Heart right ventricle (tissue), 16 donors: ENCODE measurements at regions of chr9 and their contacts with region 1.

Region 1: DNA sequence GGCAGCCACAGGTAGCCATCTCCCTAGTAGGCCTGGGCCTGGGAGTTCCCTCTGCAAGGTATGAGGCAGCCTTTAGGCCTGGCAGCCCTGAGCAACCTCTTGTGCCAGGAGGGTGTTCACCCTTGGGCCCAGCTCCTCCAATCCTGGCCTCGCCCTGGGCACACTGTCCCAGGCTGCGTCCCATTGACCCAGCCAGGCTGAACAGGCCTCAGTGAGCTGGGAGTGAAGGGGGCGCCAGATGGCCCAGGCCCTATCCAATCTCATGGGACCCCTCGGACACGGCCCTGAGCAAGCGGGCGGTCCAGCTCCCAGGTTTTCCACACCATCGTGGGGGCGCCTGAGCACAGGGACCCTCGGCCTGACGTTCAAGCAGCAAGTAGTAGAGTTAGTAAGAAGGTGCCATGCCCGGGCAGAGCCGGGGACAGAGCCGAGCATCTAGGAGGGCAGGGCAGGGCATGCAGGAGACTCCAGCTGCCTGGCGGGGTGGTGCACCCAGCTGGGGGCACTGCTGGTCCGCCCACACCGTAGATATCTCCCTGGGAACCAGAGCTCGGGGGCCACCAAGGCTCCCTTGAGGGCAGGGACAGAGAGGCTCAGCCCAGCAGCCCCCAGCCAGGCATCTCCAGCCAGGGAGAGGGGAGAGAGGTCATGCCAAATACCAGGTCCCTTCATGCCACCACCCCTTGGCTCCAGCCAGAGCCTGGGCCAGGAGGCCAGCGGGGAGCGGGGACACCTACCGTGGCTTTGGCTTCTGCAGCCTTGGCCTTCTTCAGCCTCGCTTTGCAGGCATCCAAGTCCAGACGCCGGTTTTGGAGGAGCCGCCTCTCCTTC is 14.2 kb downstream of the SH3GLB2 start:
- DNase-seq: no peak
- ATAC-seq: no peak
- H3K4me3 ChIP-seq: no peak overlapping the region
- H3K27ac ChIP-seq: no peak overlapping the region
- H3K4me1 ChIP-seq: no peaks in the 10 kb centered on the region
- H3K27me3 ChIP-seq: no peaks in the 10 kb centered on the region
- CTCF ChIP-seq: no peak

Region 2: DNA sequence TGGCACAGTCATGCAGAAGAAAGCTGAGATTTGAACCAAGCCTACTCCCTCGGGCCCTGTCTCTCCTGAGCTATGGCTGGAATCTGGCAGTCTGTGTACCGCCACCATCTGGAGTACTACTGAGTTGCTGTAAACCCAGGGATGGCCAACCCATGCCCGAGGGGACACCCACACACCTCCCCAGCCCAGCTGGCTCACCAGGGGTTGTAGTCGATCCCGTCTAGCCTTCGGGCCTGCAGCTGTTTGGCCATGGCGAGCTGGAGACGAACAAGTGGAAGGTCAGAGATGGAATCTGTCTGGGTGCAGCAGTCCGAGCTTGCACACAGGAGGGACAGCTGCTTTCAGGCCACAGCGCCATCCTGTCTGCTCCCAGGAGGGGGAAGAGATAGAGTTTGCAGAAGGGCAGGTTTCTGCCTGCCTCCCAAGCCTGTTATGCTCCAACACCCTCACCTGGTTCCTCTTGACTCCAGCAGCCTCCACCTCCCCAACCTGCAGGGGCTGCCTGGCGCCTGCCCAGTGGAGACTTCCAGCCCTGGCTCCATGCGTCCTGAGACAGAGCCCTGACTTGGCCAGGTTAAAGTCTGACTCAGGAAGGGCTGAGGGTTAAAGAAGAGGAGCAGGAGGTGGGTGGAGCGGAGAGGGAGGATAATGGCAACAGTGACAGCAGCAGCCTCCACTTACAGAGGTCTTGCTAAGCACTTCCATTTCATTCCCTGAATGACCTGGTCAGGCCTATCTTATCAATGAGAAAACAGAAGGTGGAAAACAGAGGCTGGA is 168.5 kb before region 1 on chr9:
- intact Hi-C with region 1: loop called in 1 of 10 experiments (anchors 10 kb)
- DNase-seq: no peak
- ATAC-seq: no peak
- H3K4me3 ChIP-seq: no peak overlapping the region
- H3K27ac ChIP-seq: no peak overlapping the region
- H3K4me1 ChIP-seq: no peaks in the 10 kb centered on the region
- H3K27me3 ChIP-seq: no peaks in the 10 kb centered on the region
- CTCF ChIP-seq: no peak

Region 3: DNA sequence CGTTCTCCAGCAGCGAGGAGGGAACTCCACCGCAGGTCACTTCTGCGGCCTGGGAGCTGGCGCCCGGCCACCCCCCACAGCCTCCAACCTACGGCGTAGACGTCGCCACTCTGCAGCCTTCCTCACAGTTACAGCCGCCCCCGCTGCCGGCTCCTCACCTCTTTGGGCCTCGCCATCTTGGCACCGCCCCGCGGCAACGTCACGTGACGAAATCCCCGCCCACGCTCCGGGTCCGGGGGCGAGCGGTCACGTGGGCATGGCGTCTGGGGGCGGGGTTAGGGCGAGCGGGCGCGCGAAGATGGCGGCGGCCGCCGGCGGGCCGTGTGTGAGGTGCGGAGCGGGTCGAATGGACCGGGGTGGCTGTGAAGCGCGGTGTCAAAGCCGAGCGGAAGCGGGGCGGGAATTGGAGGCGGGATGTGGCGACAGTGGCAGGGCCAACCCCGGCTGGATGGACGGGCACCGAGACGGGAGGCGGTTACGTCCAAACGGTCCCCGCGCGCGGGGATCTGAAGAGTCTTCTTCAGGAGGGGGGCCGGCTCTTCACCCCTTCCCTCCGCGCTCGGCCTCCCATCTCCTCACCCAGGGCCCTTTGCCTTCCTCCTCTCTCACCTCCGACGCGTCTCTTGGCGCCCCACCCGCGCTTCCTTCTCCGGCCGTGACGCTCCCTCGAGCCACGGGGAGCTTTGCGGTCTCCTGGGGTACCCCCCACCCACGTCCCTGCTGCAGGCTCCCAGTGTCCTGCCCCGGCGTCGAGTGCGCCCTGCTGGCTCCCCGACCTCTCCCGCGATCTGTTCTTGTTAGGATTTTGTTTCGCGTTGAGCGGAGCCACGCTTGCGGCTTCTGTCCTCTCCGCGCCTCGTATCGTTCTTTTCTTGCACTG is 66.2 kb before region 1 on chr9 and contains the starts of genes DOLK and NUP188:
- intact Hi-C with region 1: no loop called
- DNase-seq: peak; percentile 97 to 99
- ATAC-seq: peak; percentile 89 to 96 (median 94)
- H3K4me3 ChIP-seq: peak within 1 kb of the TSS; percentile 73 to 96 (median 85)
- H3K27ac ChIP-seq: peak within 1 kb of the TSS; percentile 73 to 96 (median 93)
- H3K4me1 ChIP-seq: peaks cover 9 to 45% (median 30%) of the 10 kb centered on the region in 9 donors
- H3K27me3 ChIP-seq: no peaks in the 10 kb centered on the region
- CTCF ChIP-seq: no peak
- total RNA-seq, gene DOLK: 6.0 to 12.0 (median 8.8) TPM
- total RNA-seq, gene NUP188: 16.1 to 27.3 (median 20.6) TPM

Region 4: DNA sequence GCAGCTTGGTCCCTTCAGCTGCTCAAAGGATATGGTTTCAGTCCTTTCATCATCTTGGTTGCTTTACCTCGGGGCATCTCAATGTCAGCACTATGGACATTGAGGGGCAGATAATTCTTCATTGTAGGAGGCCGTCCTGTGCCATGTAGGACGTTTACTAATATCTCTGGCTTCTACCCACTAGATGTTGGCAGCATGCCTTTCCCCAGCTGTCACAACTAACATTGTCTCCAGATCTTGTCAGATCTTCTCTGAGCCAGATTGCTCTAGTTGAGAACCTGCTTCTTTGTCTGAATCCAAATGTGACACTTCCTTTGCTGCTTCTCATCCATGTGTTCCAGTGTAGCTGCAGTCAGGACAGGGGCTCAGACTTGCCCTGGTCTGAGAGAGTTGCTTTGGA is 107.6 kb after region 1 on chr9:
- intact Hi-C with region 1: no loop called
- DNase-seq: no peak
- ATAC-seq: no peak
- H3K4me3 ChIP-seq: no peak overlapping the region
- H3K27ac ChIP-seq: no peak overlapping the region
- H3K4me1 ChIP-seq: peaks cover 0 to 7% (median 0%) of the 10 kb centered on the region in 9 donors
- H3K27me3 ChIP-seq: no peaks in the 10 kb centered on the region
- CTCF ChIP-seq: no peak